ENCODE measurements at regions of chr2 and their contacts with region 1.

Region 1: GRCh38 chr2:28855193-28855592 is 14.9 kb downstream of the TRMT61B start:
- DNase-seq: no peak
- ATAC-seq: no peak
- H3K4me3 ChIP-seq: no peak overlapping the region
- H3K27ac ChIP-seq: no peak overlapping the region
- H3K4me1 ChIP-seq: no peaks in the 10 kb centered on the region
- H3K27me3 ChIP-seq: no peaks in the 10 kb centered on the region
- CTCF ChIP-seq: no peak
- EP300 ChIP-seq: no peak
- POLR2A ChIP-seq: no peak
- RAD21 ChIP-seq: no peak

Region 2: DNA sequence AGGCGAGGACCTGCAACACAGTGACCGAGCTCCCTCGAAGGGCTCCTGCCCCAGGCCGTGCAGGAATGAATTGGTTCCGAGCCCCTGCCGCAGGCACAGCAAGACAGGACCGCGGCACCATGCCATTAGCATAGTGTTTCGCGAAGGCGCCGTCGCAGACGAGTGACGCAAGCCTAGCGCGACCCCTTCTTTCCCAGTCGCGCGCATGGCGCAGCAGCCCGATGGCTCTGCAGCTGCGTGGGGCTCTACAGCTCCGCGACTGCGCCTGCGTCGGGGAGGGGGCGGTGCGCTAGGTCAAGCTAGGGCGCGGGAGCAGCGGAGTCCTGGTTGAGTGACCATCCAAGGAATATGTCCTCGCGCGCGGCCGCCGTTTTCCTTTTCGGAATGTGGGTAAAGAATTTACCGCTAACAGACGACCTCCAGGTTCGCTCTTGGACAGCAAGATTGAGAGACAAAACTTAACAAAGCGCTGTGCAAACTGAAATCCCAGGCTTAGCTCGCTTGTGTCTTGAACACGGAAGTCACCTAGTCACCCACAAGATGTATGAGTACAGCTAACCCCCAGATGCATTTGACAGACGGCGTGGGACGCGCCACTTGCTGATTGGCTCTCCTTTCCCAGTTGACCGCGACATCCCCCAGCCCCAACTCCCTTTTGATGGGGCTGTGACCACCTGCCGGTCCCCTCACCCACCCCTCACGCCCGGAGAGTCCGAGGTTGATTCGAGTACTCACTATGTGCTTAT is 15.1 kb after region 1 on chr2 and contains the start of gene TRMT61B:
- CTCF ChIA-PET with region 1: no interaction called
- POLR2A ChIA-PET with region 1: interaction called, 11 read pairs
- in situ Hi-C with region 1: no loop called
- intact Hi-C with region 1: no loop called
- DNase-seq: peak; percentile 97 to 98 (median 98)
- ATAC-seq: peak; percentile 99
- H3K4me3 ChIP-seq: peak within 1 kb of the TSS; percentile 94
- H3K27ac ChIP-seq: peak within 1 kb of the TSS; percentile 93
- H3K4me1 ChIP-seq: peaks cover 4 to 12% of the 10 kb centered on the region in 2 experiments; a peak in 4 of 5 replicates
- H3K27me3 ChIP-seq: no peaks in the 10 kb centered on the region
- CTCF ChIP-seq: no peak
- EP300 ChIP-seq: 0 out of 2 replicates have a peak, but pooled peaks have one; percentile 16
- POLR2A ChIP-seq: peak; percentile 98
- RAD21 ChIP-seq: no peak
- polyA plus RNA-seq, gene TRMT61B: 16.7 to 26.8 TPM

Region 3: GRCh38 chr2:29146197-29146596 is 291.0 kb after region 1 on chr2:
- CTCF ChIA-PET with region 1: no interaction called
- POLR2A ChIA-PET with region 1: no interaction called
- in situ Hi-C with region 1: no loop called
- intact Hi-C with region 1: no loop called
- DNase-seq: no peak
- ATAC-seq: no peak
- H3K4me3 ChIP-seq: no peak overlapping the region
- H3K27ac ChIP-seq: no peak overlapping the region
- H3K4me1 ChIP-seq: no peaks in the 10 kb centered on the region
- H3K27me3 ChIP-seq: peaks cover 0 to 3% of the 10 kb centered on the region in 2 experiments; a peak in 2 of 5 replicates
- CTCF ChIP-seq: no peak
- EP300 ChIP-seq: no peak
- POLR2A ChIP-seq: no peak
- RAD21 ChIP-seq: no peak

Measured in K562 (cell line).